OCI-LY7 (cell line): ENCODE measurements at regions of chr3 and their contacts with region 1.

Region 1: GRCh38 chr3:181709537-181710279 is 2.0 kb upstream of the SOX2 start:
- DNase-seq: peak; percentile 84
- H3K4me3 ChIP-seq: peak overlapping the region; percentile 46
- H3K27ac ChIP-seq: peak overlapping the region; percentile 18
- H3K4me1 ChIP-seq: peaks cover 45% of the 10 kb centered on the region
- CTCF ChIP-seq: peak; percentile 98

Region 2: GRCh38 chr3:181808053-181808452 is 98.3 kb after region 1 on chr3:
- CTCF ChIA-PET with region 1: no interaction called
- POLR2A ChIA-PET with region 1: interaction called, 4 read pairs
- intact Hi-C with region 1: loop called (anchors 10 kb)
- DNase-seq: peak; percentile 42
- H3K4me3 ChIP-seq: no peak overlapping the region
- H3K27ac ChIP-seq: peak overlapping the region; percentile 1
- H3K4me1 ChIP-seq: peaks cover 35% of the 10 kb centered on the region
- CTCF ChIP-seq: no peak

Region 3: GRCh38 chr3:181921220-181921619 is 211.5 kb after region 1 on chr3:
- CTCF ChIA-PET with region 1: no interaction called
- POLR2A ChIA-PET with region 1: interaction called, 3 read pairs
- intact Hi-C with region 1: loop called (anchors 5 kb)
- DNase-seq: peak; percentile 82
- H3K4me3 ChIP-seq: peak overlapping the region; percentile 44
- H3K27ac ChIP-seq: peak overlapping the region; percentile 79
- H3K4me1 ChIP-seq: peaks cover 62% of the 10 kb centered on the region
- CTCF ChIP-seq: no peak

Region 4: GRCh38 chr3:182258538-182259177 is 549.0 kb after region 1 on chr3:
- CTCF ChIA-PET with region 1: no interaction called
- POLR2A ChIA-PET with region 1: no interaction called
- intact Hi-C with region 1: loop called (anchors 1 kb)
- DNase-seq: peak; percentile 65
- H3K4me3 ChIP-seq: no peak overlapping the region
- H3K27ac ChIP-seq: no peak overlapping the region
- H3K4me1 ChIP-seq: peaks cover 21% of the 10 kb centered on the region
- CTCF ChIP-seq: peak; percentile 93

Region 5: GRCh38 chr3:182490596-182491491 is 781.1 kb after region 1 on chr3:
- CTCF ChIA-PET with region 1: no interaction called
- POLR2A ChIA-PET with region 1: no interaction called
- intact Hi-C with region 1: loop called (anchors 5 kb)
- DNase-seq: peak; percentile 78
- H3K4me3 ChIP-seq: peak overlapping the region; percentile 12
- H3K27ac ChIP-seq: peak overlapping the region; percentile 14
- H3K4me1 ChIP-seq: peaks cover 49% of the 10 kb centered on the region
- CTCF ChIP-seq: peak; percentile 92

Region 6: GRCh38 chr3:182683453-182683852 is 973.7 kb after region 1 on chr3:
- CTCF ChIA-PET with region 1: no interaction called
- POLR2A ChIA-PET with region 1: no interaction called
- intact Hi-C with region 1: loop called (anchors 1 kb)
- DNase-seq: peak; percentile 77
- H3K4me3 ChIP-seq: no peak overlapping the region
- H3K27ac ChIP-seq: peak overlapping the region; percentile 54
- H3K4me1 ChIP-seq: peaks cover 12% of the 10 kb centered on the region
- CTCF ChIP-seq: peak; percentile 99